Activated CD8-positive, alpha-beta T cell treated with anti-CD3 and anti-CD28 coated beads, Interleukin-2, amount 10 ng/mL, durations not matched to agents 7 days and 5 days (primary cell): ENCODE measurements at regions of chr4 and their contacts with region 1.

Region 1: GRCh38 chr4:151117371-151117962 is 18.0 kb downstream of the RPS3A start:
- DNase-seq: peak; percentile 70
- ATAC-seq: peak; percentile 77
- H3K4me3 Mint-ChIP-seq: no peak overlapping the region
- H3K27ac Mint-ChIP-seq: no peak overlapping the region
- H3K4me1 Mint-ChIP-seq: peaks cover 3% of the 10 kb centered on the region
- H3K27me3 Mint-ChIP-seq: no peaks in the 10 kb centered on the region

Region 2: GRCh38 chr4:151099229-151099975 is 18.1 kb before region 1 on chr4 and contains the start of gene RPS3A:
- CTCF ChIA-PET with region 1: interaction called, 20 read pairs
- POLR2A ChIA-PET with region 1: interaction called, 5 read pairs
- DNase-seq: peak; percentile 97
- ATAC-seq: peak; percentile 93
- H3K4me3 Mint-ChIP-seq: peak within 1 kb of the TSS; percentile 86
- H3K27ac Mint-ChIP-seq: peak within 1 kb of the TSS; percentile 99
- H3K4me1 Mint-ChIP-seq: peaks cover 42% of the 10 kb centered on the region
- H3K27me3 Mint-ChIP-seq: peaks cover 4% of the 10 kb centered on the region
- total RNA-seq, gene RPS3A: 1,540 to 1,580 TPM

Region 3: GRCh38 chr4:151105454-151106032 is 11.9 kb before region 1 on chr4:
- CTCF ChIA-PET with region 1: interaction called, 20 read pairs
- POLR2A ChIA-PET with region 1: interaction called, 5 read pairs
- DNase-seq: no peak
- ATAC-seq: no peak
- H3K4me3 Mint-ChIP-seq: no peak overlapping the region
- H3K27ac Mint-ChIP-seq: no peak overlapping the region
- H3K4me1 Mint-ChIP-seq: peaks cover 25% of the 10 kb centered on the region
- H3K27me3 Mint-ChIP-seq: no peaks in the 10 kb centered on the region

Region 4: DNA sequence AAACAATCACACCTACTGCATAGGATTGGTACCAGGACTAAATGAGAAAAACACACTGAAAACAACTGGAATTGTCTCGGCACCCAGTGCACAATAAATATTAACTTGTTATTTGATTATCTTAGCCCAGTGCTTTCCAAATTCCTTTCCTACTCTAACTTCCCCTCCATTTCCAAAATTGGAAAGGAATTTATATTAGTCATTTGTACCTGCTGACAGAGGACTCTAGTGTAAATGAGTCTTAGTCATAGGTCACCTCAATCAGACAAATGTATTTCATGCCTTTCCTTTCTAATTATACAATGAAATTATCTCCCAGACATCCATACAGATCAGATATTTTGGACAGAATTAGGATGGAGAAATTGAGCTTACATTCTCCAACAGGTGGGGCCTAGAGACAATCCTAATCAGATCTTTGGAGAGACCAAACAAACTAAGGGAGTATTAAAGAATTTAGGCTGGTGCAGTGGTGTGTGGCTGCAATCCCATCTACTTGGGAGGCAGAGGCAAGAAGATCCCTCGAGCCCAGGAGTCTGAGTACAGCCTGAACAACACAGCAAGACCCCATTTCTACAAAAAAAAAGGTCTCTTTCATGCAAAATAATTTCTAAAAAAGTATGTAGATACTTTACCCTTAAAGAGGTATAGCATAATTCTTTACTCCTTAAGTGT is 197.9 kb after region 1 on chr4:
- CTCF ChIA-PET with region 1: no interaction called
- POLR2A ChIA-PET with region 1: no interaction called
- DNase-seq: no peak
- ATAC-seq: no peak
- H3K4me3 Mint-ChIP-seq: no peak overlapping the region
- H3K27ac Mint-ChIP-seq: no peak overlapping the region
- H3K4me1 Mint-ChIP-seq: no peaks in the 10 kb centered on the region
- H3K27me3 Mint-ChIP-seq: peaks cover 5% of the 10 kb centered on the region